ENCODE measurements at regions of chr21 and their contacts with region 1.

Region 1: DNA sequence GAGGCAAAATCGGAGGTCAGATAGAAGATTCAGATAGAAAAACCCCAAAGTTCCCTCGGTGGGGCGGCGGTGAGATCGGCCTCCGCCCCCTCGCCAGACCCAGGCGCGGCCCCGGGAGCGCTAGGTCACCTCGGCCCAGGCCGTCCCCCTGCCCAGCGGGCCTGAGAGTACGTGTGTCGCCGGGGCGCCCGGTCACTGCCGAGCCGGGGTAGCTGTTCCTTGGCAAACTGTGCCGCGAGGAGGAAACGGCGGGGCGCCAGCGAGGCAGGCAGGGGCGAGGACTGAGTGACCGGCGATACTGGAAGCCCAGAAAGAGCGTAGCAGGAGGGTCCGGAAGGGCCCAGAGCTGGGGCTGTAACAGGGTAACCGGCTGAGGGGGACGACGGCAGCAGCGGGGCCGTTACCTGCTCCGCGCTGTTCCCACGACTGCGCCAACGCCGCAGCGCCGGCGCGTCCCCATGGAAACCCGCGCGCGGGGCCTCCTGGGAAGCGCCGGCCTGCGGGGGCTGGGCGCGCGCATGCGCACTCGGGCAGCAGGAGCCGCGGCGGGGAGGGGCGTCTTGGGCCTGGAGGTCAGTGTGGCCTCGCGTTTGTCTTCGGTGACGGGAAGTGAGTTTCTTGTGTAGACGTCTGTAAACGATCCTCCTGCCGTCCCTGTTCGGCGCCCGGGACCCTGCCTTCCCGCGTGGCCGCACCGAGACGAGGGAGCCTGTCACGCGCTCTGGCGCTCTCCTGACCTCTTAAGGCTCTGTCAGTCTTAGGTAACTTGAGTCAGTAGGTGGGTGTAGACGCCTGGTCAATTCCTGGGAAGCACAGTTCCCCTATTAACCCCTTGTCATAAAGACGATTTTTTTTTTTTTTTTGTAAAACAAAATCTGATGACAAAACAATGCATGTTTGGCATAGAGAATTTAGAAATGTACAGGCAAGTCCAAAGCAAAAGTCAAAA is at the start of gene LCA5L:
- DNase-seq: peak; percentile 47
- ATAC-seq: peak; percentile 94
- H3K4me3 ChIP-seq: peak within 1 kb of the TSS; percentile 89
- H3K27ac ChIP-seq: peak within 1 kb of the TSS; percentile 81
- H3K4me1 ChIP-seq: peaks cover 4% of the 10 kb centered on the region
- H3K27me3 ChIP-seq: no peaks in the 10 kb centered on the region; a peak in 1 of 4 replicates
- CTCF ChIP-seq: peak in 2 of 3 experiments; percentile 9 to 41; a peak in 2 of 6 replicates
- EP300 ChIP-seq: no peak
- POLR2A ChIP-seq: peak; percentile 89
- RAD21 ChIP-seq: no peak
- polyA plus RNA-seq, gene LCA5L: 0.22 to 0.55 TPM

Region 2: GRCh38 chr21:39183237-39184007 is 262.2 kb before region 1 on chr21 and contains the start of gene PSMG1:
- CTCF ChIA-PET with region 1: interaction called, 7 read pairs
- POLR2A ChIA-PET with region 1: interaction called, 7 read pairs
- RAD21 ChIA-PET with region 1: no interaction called
- SMC1A ChIA-PET with region 1: interaction called, 3 read pairs
- in situ Hi-C with region 1: no loop called
- intact Hi-C with region 1: loop called (anchors 10 kb)
- DNase-seq: peak; percentile 77
- ATAC-seq: peak; percentile 93
- H3K4me3 ChIP-seq: peak within 1 kb of the TSS; percentile 95
- H3K27ac ChIP-seq: peak within 1 kb of the TSS; percentile 88
- H3K4me1 ChIP-seq: peaks cover 26% of the 10 kb centered on the region
- H3K27me3 ChIP-seq: no peaks in the 10 kb centered on the region
- CTCF ChIP-seq: no peak
- EP300 ChIP-seq: no peak
- POLR2A ChIP-seq: peak; percentile 94
- RAD21 ChIP-seq: no peak
- polyA plus RNA-seq, gene PSMG1: 21.3 to 79.8 TPM

Region 3: DNA sequence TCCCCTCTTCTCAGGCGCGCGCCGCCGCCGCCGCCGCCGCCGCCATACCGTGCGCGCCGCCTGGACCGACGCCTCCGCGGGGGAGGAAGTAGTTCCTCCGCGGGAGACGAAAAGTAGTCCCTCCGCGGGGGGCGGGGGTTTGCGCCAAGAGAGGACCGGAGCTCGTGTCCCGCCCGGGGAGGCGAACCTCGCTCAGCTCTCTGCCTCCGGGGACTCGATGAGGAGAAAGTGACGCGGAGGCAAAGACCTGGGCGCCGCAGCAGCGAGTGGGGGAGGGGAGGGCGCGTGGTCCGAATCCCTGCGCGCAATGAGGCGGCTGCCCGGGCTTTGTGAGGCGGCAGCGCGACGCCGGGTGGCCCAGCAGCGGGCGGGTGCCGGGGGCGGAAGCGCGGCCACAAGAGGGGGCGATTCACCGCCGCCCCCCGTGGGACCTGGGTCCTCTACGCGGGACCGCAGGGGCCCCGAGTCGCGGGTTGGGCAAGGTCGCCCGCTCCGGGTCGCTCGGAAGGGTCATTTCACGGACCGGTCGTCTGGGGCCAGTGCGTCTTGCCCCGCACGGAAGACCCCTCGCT is 131.9 kb before region 1 on chr21 and contains the start of gene BRWD1:
- CTCF ChIA-PET with region 1: no interaction called
- POLR2A ChIA-PET with region 1: interaction called, 3 read pairs
- RAD21 ChIA-PET with region 1: no interaction called
- SMC1A ChIA-PET with region 1: interaction called, 3 read pairs
- in situ Hi-C with region 1: no loop called
- intact Hi-C with region 1: loop called (anchors 10 kb)
- DNase-seq: no peak
- ATAC-seq: peak; percentile 77
- H3K4me3 ChIP-seq: peak within 1 kb of the TSS; percentile 85
- H3K27ac ChIP-seq: peak within 1 kb of the TSS; percentile 93
- H3K4me1 ChIP-seq: peaks cover 4% of the 10 kb centered on the region; the same call in 1 of the 2 replicates
- H3K27me3 ChIP-seq: no peaks in the 10 kb centered on the region
- CTCF ChIP-seq: peak; percentile 4 to 29 (median 16); a peak in 3 of 6 replicates
- EP300 ChIP-seq: 0 out of 4 replicates have a peak, but pooled peaks of 1 of the 2 experiments have one; percentile 4
- POLR2A ChIP-seq: peak; percentile 92
- RAD21 ChIP-seq: no peak
- polyA plus RNA-seq, gene BRWD1: 3.1 to 3.4 TPM

Region 4: DNA sequence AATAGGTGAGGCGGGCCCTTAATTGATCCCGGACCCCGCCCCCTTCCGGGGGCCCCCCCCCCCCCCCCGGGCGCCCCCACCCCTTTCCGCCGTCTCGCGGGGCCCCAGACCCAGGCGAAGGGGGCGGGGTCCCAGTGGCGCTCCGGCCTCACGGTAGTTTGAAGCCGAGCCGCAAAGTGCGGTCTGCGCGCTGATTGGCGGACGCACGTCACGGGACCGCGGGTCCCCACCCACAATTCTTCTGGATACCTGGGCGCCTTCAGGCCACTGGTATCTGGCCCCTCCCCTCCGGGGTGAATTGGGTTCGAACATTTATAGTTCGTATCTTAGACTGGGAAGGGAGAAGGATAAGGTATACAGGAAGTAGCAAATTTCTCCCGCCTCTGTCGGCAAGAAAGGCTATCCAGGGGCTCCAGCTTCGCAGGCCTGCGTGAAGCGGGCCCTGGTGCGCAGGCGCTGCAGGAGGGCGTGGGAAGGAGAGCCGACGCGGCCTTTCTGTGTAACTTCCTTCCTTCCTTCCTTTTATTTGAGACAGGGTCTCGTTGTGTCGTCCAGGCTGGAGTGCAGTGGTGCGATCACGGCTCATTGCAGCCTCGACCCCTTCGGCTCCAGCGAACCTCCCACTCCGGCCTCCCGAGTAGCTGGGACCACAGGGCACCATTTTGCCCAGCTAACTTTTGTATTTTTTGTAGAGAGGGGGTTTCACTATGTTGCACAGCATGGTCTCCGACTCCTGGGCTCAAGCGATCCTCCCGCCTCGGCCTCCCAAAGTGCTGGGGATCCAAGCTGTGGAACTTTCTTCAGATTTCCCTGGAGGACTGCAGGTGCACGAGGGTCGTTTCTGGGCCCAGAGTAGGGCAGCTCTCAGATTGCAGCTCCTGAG is 96.1 kb before region 1 on chr21:
- CTCF ChIA-PET with region 1: interaction called, 24 read pairs
- POLR2A ChIA-PET with region 1: no interaction called
- RAD21 ChIA-PET with region 1: no interaction called
- SMC1A ChIA-PET with region 1: interaction called, 3 read pairs
- in situ Hi-C with region 1: no loop called
- intact Hi-C with region 1: no loop called
- DNase-seq: peak; percentile 82
- ATAC-seq: peak; percentile 92
- H3K4me3 ChIP-seq: peak overlapping the region; percentile 88
- H3K27ac ChIP-seq: peak overlapping the region; percentile 77
- H3K4me1 ChIP-seq: 0 out of 2 replicates have a peak, but pooled peaks cover 3% of the 10 kb centered on the region
- H3K27me3 ChIP-seq: no peaks in the 10 kb centered on the region
- CTCF ChIP-seq: no peak
- EP300 ChIP-seq: no peak
- POLR2A ChIP-seq: peak; percentile 92
- RAD21 ChIP-seq: no peak

Region 5: GRCh38 chr21:39422527-39423241 is 22.9 kb before region 1 on chr21:
- CTCF ChIA-PET with region 1: interaction called, 24 read pairs
- POLR2A ChIA-PET with region 1: no interaction called
- RAD21 ChIA-PET with region 1: interaction called, 5 read pairs
- SMC1A ChIA-PET with region 1: interaction called, 7 read pairs
- in situ Hi-C with region 1: no loop called
- intact Hi-C with region 1: no loop called
- DNase-seq: peak; percentile 41
- ATAC-seq: peak; percentile 97
- H3K4me3 ChIP-seq: no peak overlapping the region
- H3K27ac ChIP-seq: no peak overlapping the region
- H3K4me1 ChIP-seq: no peaks in the 10 kb centered on the region
- H3K27me3 ChIP-seq: no peaks in the 10 kb centered on the region
- CTCF ChIP-seq: no peak
- EP300 ChIP-seq: peak; percentile 40 to 49; a peak in 2 of 4 replicates
- POLR2A ChIP-seq: no peak
- RAD21 ChIP-seq: no peak

Measured in GM12878 (cell line).